PC-3 (cell line): ENCODE measurements at regions of chr6 and their contacts with region 1.

Region 1: DNA sequence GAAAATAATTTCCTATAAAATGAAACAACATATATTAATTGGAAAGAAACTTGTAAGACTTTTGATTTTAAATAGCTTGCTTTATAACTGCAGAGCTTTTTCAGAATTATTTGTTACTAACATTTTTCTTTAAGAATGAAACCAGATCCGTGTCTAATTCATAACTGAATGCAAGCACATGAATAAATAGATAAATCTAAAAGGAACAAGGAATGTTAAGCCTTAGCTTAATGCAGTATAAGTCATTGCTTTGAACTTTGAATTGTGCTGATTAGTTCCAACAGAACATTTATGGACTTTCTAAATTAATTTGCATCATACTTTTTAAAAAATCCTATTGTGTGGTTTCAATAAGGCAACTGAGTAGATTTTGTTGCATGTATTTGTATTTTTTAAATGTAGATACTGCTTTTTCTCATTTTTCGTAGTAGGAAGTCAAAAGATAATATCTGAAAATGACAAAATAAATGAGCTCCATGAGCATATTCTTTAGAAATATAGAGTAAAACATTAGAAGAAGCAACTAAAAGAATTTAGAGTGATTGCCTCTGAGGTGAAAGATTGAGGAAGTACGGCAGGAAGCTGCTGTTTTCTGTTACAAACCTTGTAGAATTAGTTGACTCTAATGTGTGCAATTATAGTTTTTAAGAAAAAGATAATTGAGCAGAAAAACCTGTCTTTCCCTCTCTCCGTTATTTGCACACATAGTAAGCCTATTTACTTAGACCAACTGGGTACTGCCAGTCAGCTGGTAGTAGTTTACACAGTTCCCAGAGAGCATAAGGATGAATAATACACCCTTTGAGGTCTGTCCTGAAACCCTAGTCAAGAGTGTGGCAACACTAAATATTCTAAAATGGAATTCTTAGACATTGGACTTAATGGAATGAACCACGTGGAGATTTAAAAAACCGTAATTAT is 32.6 kb upstream of the SLC35D3 start:
- DNase-seq: peak; percentile 7
- ATAC-seq: no peak
- H3K4me3 ChIP-seq: no peak overlapping the region
- H3K27ac ChIP-seq: no peak overlapping the region
- H3K4me1 ChIP-seq: 0 out of 2 replicates have a peak, but pooled peaks cover 3% of the 10 kb centered on the region
- H3K27me3 ChIP-seq: no peaks in the 10 kb centered on the region
- CTCF ChIP-seq: no peak

Region 2: DNA sequence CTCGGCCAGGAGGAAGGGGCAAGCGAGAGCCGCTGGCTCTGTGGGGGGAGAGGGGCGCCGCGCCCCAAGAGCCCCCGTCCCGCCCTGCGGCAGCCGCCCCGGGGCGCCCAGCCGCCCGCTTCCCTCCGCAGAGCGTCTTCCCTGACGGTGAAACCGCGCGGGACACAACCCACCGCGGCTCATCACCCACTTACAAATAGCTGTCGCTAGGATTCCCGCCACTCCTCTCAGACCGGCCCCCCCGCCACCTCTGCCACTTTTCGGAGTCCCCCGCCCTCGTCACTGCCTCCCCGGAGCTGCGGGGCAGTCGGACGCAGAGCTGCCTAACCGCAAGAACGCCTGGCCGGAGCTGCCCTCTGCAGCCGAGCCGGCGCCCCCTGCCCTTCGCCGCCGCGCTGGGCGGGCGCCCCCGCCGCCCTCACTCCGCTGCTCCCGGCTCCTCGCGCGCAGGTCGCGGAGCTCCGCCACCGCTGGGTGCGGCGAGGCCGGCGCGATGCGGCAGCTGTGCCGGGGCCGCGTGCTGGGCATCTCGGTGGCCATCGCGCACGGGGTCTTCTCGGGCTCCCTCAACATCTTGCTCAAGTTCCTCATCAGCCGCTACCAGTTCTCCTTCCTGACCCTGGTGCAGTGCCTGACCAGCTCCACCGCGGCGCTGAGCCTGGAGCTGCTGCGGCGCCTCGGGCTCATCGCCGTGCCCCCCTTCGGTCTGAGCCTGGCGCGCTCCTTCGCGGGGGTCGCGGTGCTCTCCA is 32.6 kb after region 1 on chr6 and contains the start of gene SLC35D3:
- CTCF ChIA-PET with region 1: no interaction called
- POLR2A ChIA-PET with region 1: interaction called, 16 read pairs
- intact Hi-C with region 1: no loop called
- DNase-seq: no peak
- ATAC-seq: peak; percentile 48
- H3K4me3 ChIP-seq: peak within 1 kb of the TSS; percentile 65
- H3K27ac ChIP-seq: no peak within 1 kb of the TSS
- H3K4me1 ChIP-seq: no peaks in the 10 kb centered on the region
- H3K27me3 ChIP-seq: peaks cover 15% of the 10 kb centered on the region
- CTCF ChIP-seq: no peak
- total RNA-seq, gene SLC35D3: not detected in 2 replicates